ENCODE measurements at regions of chr19 and their contacts with region 1.

Region 1: DNA sequence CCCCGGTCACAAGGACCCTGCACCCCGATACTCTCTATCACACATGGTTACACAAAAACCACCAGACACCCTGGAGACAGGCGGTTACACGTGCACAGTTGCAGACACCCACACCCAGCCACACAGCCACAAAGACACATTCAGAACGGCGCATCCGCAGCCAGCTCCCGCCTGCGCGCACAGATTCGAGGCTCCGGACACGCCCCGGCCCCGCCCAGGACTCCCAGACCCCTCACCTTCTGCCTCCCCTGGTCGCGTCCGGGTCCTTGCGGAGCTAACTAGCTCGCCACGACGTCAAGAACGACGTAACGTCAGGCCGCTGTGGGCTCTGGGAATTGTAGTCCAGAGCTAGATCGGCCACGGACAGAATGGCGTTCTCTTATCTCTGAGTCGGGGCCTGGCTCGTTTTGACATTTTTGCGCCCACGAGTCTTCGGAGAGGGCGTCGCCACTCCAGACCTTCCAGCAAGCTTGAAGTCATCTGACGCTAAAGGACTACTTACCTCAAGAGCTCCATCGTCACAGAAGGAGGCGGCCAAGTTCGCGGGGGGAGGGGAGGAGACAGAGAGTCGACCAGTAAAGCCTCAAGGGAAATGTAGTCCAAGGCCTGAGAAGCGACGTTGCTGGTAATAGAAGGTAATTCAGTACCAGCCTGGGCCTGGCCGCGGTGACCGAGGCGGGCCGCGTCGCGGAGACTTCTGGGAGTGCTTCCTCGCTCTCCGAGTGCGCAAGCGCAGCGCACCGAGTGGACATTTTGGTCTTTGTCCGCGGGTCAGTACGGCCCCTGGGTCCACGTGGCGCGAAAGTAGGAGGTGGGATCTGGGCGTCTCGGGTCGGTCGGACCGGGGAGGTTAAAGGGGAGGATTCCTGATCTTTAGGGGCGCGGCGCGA is at the starts of genes ZNF146 and ZNF565:
- DNase-seq: peak; percentile 98
- H3K4me3 Mint-ChIP-seq: no peak within 1 kb of the TSS
- H3K27ac Mint-ChIP-seq: no peak within 1 kb of the TSS
- H3K4me1 Mint-ChIP-seq: peaks cover 27% of the 10 kb centered on the region
- H3K27me3 Mint-ChIP-seq: no peaks in the 10 kb centered on the region
- total RNA-seq, gene ZNF146: 78.2 to 79.2 TPM
- total RNA-seq, gene ZNF565: 2.0 to 2.2 TPM

Region 2: DNA sequence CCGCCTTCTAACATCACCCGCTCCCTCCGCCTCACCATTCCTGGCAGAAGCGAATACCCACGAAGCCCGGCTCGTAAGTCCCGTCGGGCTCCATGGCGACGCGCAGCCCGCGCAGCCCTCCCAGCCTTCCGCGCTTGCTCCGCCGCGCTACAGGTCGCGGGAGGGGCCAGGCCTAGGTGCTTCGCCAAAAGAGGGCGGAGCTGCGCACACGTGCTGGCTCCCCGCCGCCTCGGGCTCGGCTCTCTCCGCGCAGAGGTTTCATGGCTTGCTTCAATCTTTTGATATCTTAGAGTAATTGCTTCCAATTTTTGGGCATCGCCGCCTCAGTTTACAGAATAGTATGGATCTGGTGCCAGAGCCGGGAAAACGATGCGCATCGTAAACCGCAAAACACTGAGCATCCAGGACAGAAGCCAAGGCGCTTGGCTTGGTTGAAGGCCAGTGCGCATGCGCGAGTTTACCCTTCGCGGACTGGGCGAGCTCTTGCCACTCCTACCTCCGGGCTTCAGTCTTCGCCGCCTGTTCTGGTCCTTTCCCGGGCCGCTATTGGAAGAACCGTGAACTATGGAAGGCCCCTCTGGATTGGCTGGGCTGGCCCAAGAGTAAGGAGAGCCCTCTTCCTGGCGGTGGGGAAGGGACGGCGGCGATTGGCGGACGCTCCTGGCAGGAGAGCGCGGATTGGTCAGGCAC is 99.7 kb before region 1 on chr19 and contains the start of gene POLR2I:
- CTCF ChIA-PET with region 1: no interaction called
- intact Hi-C with region 1: loop called (anchors 1 kb)
- DNase-seq: peak; percentile 99
- H3K4me3 Mint-ChIP-seq: peak within 1 kb of the TSS; percentile 99
- H3K27ac Mint-ChIP-seq: peak within 1 kb of the TSS; percentile 91
- H3K4me1 Mint-ChIP-seq: peaks cover 31% of the 10 kb centered on the region
- H3K27me3 Mint-ChIP-seq: no peaks in the 10 kb centered on the region
- total RNA-seq, gene POLR2I: 86.8 to 87.4 TPM

Region 3: GRCh38 chr19:36378625-36379509 is 164.2 kb after region 1 on chr19 and contains the start of gene ZFP14:
- CTCF ChIA-PET with region 1: no interaction called
- intact Hi-C with region 1: loop called (anchors 2 kb)
- DNase-seq: peak; percentile 96
- H3K4me3 Mint-ChIP-seq: peak within 1 kb of the TSS; percentile 90
- H3K27ac Mint-ChIP-seq: peak within 1 kb of the TSS; percentile 84
- H3K4me1 Mint-ChIP-seq: peaks cover 10% of the 10 kb centered on the region
- H3K27me3 Mint-ChIP-seq: no peaks in the 10 kb centered on the region
- total RNA-seq, gene ZFP14: 2.2 to 3.1 TPM

Region 4: GRCh38 chr19:36449059-36449670 is 234.5 kb after region 1 on chr19:
- CTCF ChIA-PET with region 1: no interaction called
- intact Hi-C with region 1: no loop called
- DNase-seq: no peak
- H3K4me3 Mint-ChIP-seq: no peak overlapping the region
- H3K27ac Mint-ChIP-seq: no peak overlapping the region
- H3K4me1 Mint-ChIP-seq: no peaks in the 10 kb centered on the region
- H3K27me3 Mint-ChIP-seq: no peaks in the 10 kb centered on the region

Region 5: GRCh38 chr19:36528194-36528920 is 313.7 kb after region 1 on chr19 and contains the start of gene ZNF260:
- CTCF ChIA-PET with region 1: no interaction called
- intact Hi-C with region 1: loop called (anchors 1 kb)
- DNase-seq: peak; percentile 96
- H3K4me3 Mint-ChIP-seq: peak within 1 kb of the TSS; percentile 100
- H3K27ac Mint-ChIP-seq: peak within 1 kb of the TSS; percentile 98
- H3K4me1 Mint-ChIP-seq: peaks cover 16% of the 10 kb centered on the region
- H3K27me3 Mint-ChIP-seq: no peaks in the 10 kb centered on the region
- total RNA-seq, gene ZNF260: 3.7 to 5.4 TPM

Region 6: DNA sequence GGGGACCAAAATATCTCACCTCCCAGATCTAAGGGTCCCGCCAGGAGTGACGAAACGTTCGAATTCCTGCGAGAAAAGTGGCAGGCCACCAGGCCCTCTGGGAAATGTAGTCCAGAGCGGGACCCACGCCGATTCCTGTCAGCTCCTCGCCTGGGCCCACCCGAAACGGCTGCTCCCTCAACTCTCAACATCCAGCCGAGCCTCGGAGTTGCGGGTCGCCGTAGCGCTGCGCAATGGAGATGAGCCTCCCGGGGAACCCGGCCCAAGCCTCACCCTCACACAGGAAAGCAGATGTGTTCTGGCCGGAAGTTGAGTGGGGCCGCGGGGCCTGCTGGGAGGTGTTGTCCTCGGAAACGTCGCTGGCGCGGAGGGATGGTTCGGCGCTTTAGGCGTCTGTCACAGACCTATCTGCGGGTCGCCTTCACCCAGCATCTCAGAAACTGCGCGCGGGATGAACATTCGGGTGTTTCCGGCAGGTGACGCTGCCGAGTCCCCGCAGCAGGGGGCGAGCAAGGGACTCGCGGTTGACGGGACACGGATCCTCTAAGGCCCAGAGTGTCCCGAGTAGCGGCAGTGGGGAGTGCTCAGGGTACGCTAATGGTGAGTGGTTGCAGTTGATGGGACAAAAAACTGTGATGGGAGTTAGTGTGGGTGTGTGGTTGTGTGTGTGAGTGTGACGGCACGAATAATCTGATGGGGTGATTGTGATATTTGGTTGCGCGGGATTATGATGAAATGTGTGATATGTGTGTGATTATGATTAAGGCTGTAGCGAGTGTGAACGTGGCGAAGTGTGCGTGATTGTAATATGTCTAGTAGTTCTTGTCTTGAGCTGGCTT is 701.6 kb after region 1 on chr19 and contains the starts of genes ZNF568 and ZNF829:
- CTCF ChIA-PET with region 1: no interaction called
- intact Hi-C with region 1: loop called (anchors 10 kb)
- DNase-seq: peak; percentile 96
- H3K4me3 Mint-ChIP-seq: peak within 1 kb of the TSS; percentile 87
- H3K27ac Mint-ChIP-seq: peak within 1 kb of the TSS; percentile 91
- H3K4me1 Mint-ChIP-seq: peaks cover 17% of the 10 kb centered on the region
- H3K27me3 Mint-ChIP-seq: no peaks in the 10 kb centered on the region
- total RNA-seq, gene ZNF568: 5.3 to 6.3 TPM
- total RNA-seq, gene ZNF829: 3.5 to 3.7 TPM